Dorsolateral prefrontal cortex (tissue), 120 donors: ENCODE measurements at regions of chr3 and their contacts with region 1.

Region 1: DNA sequence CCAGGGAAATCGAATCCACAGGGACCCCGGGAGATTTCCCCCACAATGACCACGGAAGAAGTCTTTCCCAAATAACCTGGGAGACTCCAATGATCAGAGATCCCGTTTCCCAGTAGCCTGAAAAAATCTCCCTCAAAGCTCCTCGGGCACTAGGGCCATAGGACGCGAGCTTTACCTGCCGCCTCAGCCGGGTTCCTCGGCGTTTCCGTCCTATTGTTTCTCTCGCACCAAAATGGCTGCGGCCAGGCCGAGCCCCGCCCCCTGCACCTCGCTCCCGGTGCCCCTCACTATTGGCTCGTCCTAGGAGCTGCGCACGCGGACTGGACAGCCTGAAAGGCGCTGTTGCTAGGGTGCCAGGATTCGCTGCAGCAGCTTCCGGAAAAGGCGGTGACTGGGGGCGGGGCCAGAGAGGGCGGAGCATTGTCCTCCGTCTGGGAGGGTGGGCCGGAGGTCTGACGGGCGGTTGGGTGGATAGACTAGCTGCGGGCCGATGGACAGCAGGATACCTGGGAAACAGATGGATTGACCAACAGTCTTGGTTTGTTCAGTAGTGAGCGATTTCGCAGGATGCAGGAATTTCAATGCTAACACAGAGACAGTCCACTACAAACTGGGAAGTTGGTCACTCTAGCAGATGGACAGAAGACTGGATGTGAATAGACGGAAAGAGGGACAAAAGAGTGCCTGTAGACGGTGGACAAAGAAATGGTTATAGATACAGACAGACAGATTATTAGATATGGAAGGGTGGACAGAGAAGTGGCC is at the start of gene IP6K2:
- DNase-seq: peak; percentile 97 to 100 (median 98)
- H3K4me3 ChIP-seq: peak within 1 kb of the TSS; percentile 49 to 99 (median 89)
- H3K27ac ChIP-seq: peak within 1 kb of the TSS; percentile 18 to 96 (median 83)
- H3K27me3 ChIP-seq: no peaks in the 10 kb centered on the region
- CTCF ChIP-seq: peak in 30 of 56 donors; percentile 10 to 57 (median 32)
- total RNA-seq, gene IP6K2: 63.9 to 128 (median 92.9) TPM

Region 2: GRCh38 chr3:48697952-48698351 is 19.2 kb before region 1 on chr3:
- intact Hi-C with region 1: loop called in 1 of 2 experiments (anchors 2 kb)
- DNase-seq: no peak
- H3K4me3 ChIP-seq: no peak overlapping the region
- H3K27ac ChIP-seq: peak overlapping the region in 32 of 59 donors; percentile 0 to 97 (median 36)
- H3K27me3 ChIP-seq: no peaks in the 10 kb centered on the region
- CTCF ChIP-seq: peak in 10 of 56 donors; percentile 9 to 30 (median 22)